IMR-90 (cell line): ENCODE measurements at regions of chr3 and their contacts with region 1.

Region 1: DNA sequence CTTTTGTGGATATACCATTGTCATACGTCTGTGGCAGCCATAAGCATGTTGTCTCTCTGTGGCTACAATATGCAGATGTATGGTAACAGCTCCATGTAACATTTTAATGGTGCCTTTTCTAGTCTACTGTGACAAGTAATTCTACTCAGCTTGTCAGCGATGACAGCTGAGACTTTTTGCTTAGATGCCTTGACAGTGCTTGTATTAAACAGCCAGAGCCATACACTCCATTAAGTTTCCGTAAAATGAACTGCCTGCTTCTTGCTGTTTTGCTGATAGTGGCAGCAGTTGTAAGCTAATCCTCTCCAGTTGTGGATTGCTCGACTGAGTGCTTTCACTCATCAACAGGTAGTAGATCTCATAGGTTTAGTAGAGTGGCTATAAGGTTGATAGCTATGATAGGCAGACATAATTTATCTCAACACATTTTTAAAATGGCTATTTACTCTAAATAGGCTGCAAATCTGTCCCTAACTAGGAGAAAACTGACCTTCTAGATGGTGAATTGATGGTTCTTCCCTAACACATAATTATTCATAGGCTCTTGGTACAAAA is 260.2 kb upstream of the NAALADL2 start:
- DNase-seq: no peak
- ATAC-seq: no peak
- H3K4me3 ChIP-seq: no peak overlapping the region
- H3K27ac ChIP-seq: no peak overlapping the region
- H3K4me1 ChIP-seq: no peaks in the 10 kb centered on the region
- H3K27me3 ChIP-seq: no peaks in the 10 kb centered on the region
- CTCF ChIP-seq: no peak
- POLR2A ChIP-seq: no peak
- RAD21 ChIP-seq: no peak

Region 2: DNA sequence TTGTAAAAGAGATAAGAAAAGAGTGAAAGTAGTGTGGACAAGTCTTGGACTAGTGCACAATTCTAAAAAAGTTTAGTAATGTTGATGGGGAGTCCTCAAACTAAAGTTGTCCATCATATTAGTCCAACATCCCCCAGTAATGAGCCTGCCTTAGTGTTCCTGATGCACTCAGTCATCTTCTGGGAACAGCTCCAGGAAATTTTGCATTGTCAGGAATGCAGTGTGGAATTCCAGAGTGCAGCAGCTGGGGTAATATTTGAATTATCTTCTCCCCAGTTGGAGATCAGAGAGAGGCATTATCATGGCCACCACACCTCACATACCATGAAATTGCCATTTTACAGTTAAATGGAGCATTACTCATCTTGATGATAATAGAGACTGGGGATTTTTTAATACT is 268.7 kb before region 1 on chr3:
- CTCF ChIA-PET with region 1: no interaction called
- POLR2A ChIA-PET with region 1: no interaction called
- dilution Hi-C with region 1: no loop called
- in situ Hi-C with region 1: no loop called
- intact Hi-C with region 1: no loop called
- DNase-seq: peak; percentile 85
- ATAC-seq: peak; percentile 75
- H3K4me3 ChIP-seq: no peak overlapping the region
- H3K27ac ChIP-seq: no peak overlapping the region
- H3K4me1 ChIP-seq: 0 out of 2 replicates have a peak, but pooled peaks cover 3% of the 10 kb centered on the region
- H3K27me3 ChIP-seq: no peaks in the 10 kb centered on the region
- CTCF ChIP-seq: no peak
- POLR2A ChIP-seq: no peak
- RAD21 ChIP-seq: no peak

Region 3: GRCh38 chr3:175713268-175713667 is 1114.3 kb after region 1 on chr3:
- CTCF ChIA-PET with region 1: no interaction called
- POLR2A ChIA-PET with region 1: no interaction called
- dilution Hi-C with region 1: no loop called
- in situ Hi-C with region 1: no loop called
- intact Hi-C with region 1: loop called (anchors 5 kb)
- DNase-seq: peak; percentile 22
- ATAC-seq: peak; percentile 64
- H3K4me3 ChIP-seq: no peak overlapping the region
- H3K27ac ChIP-seq: no peak overlapping the region
- H3K4me1 ChIP-seq: peaks cover 2% of the 10 kb centered on the region; the same call in 1 of the 2 replicates
- H3K27me3 ChIP-seq: no peaks in the 10 kb centered on the region
- CTCF ChIP-seq: no peak
- POLR2A ChIP-seq: no peak
- RAD21 ChIP-seq: no peak